Brain microvascular endothelial cell (primary cell): ENCODE measurements at regions of chr7 and their contacts with region 1.

Region 1: GRCh38 chr7:44490351-44491200 is at the start of gene NUDCD3:
- DNase-seq: peak; percentile 73
- H3K4me3 ChIP-seq: peak within 1 kb of the TSS; percentile 76
- H3K27ac ChIP-seq: peak within 1 kb of the TSS; percentile 99
- H3K27me3 ChIP-seq: no peaks in the 10 kb centered on the region
- CTCF ChIP-seq: peak; percentile 46

Region 2: GRCh38 chr7:44240983-44241510 is 249.5 kb before region 1 on chr7:
- in situ Hi-C with region 1: loop called (anchors 25 kb)
- DNase-seq: peak; percentile 72
- H3K4me3 ChIP-seq: no peak overlapping the region
- H3K27ac ChIP-seq: no peak overlapping the region
- H3K27me3 ChIP-seq: no peaks in the 10 kb centered on the region
- CTCF ChIP-seq: peak; percentile 90